Mammary epithelial cell (primary cell): ENCODE measurements at regions of chr1 and their contacts with region 1.

Region 1: DNA sequence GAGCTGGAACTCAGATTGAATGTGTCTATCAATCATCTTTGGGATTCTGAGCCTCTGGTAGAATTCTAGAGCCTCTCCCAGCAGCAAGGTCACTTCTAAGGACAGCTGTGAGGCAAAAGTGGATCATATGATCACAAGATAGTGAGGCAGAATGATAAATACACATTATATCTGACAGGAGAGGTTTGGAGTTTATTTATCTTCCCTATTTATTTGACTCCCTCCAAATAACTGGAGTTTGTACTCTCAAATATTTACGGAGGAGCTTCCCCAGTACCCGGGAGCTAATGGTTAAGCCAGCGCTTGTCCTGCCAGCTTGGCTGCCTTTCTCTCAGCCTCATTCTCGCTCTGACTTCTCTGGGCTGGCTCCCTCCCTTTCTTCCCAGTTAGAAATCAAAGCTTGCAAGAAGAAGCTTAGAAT is 2.3 kb downstream of the HMGCS2 start:
- DNase-seq: no peak
- H3K4me3 ChIP-seq: no peak overlapping the region
- H3K27ac ChIP-seq: no peak overlapping the region
- H3K4me1 ChIP-seq: no peaks in the 10 kb centered on the region
- H3K27me3 ChIP-seq: no peaks in the 10 kb centered on the region
- CTCF ChIP-seq: no peak

Region 2: GRCh38 chr1:119816407-119816806 is 50.0 kb after region 1 on chr1:
- CTCF ChIA-PET with region 1: no interaction called
- dilution Hi-C with region 1: loop called (anchors 10 kb)
- in situ Hi-C with region 1: no loop called
- intact Hi-C with region 1: no loop called
- DNase-seq: peak; percentile 25
- H3K4me3 ChIP-seq: no peak overlapping the region
- H3K27ac ChIP-seq: no peak overlapping the region
- H3K4me1 ChIP-seq: peaks cover 29% of the 10 kb centered on the region
- H3K27me3 ChIP-seq: no peaks in the 10 kb centered on the region
- CTCF ChIP-seq: no peak

Region 3: GRCh38 chr1:119885903-119886783 is 119.8 kb after region 1 on chr1:
- CTCF ChIA-PET with region 1: no interaction called
- dilution Hi-C with region 1: no loop called
- in situ Hi-C with region 1: no loop called
- intact Hi-C with region 1: no loop called
- DNase-seq: no peak
- H3K4me3 ChIP-seq: no peak overlapping the region
- H3K27ac ChIP-seq: no peak overlapping the region
- H3K4me1 ChIP-seq: no peaks in the 10 kb centered on the region
- H3K27me3 ChIP-seq: no peaks in the 10 kb centered on the region
- CTCF ChIP-seq: peak; percentile 85 to 89